Mammary epithelial cell (primary cell): ENCODE measurements at regions of chr1 and their contacts with region 1.

Region 1: DNA sequence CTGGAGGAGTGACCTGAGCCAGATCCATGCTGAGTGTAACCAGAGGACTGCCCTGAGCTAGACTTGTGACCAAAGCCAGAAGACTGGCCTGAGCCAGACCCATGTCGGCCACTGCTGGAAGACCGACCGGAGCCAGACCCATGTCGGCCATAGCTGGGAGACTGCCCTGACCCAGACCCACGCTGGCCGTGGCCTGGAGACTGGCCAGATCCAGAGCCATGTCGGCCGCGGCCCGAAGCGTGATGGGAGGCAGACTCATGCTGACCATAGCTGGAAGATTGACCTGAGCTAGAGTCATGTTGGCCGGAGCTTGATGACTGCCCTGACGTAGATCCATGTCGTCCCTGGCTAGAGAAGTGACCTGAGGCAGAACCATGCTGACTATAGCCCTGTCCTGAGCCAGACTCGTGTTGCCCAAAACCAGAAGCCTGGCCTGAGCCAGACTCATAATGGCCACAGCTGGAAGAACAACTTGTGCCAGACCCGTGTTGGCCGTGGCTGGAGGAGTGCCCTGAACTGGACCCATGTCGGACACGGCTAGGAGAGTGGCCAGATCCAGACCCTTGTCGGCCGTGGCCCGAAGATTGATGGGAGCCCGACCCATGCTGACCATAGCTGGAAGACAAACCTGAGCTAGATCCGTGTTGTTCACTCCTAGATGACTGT is 5.1 kb downstream of the HRNR start:
- DNase-seq: no peak
- H3K4me3 ChIP-seq: no peak overlapping the region
- H3K27ac ChIP-seq: no peak overlapping the region
- H3K4me1 ChIP-seq: no peaks in the 10 kb centered on the region
- H3K27me3 ChIP-seq: no peaks in the 10 kb centered on the region
- CTCF ChIP-seq: no peak

Region 2: DNA sequence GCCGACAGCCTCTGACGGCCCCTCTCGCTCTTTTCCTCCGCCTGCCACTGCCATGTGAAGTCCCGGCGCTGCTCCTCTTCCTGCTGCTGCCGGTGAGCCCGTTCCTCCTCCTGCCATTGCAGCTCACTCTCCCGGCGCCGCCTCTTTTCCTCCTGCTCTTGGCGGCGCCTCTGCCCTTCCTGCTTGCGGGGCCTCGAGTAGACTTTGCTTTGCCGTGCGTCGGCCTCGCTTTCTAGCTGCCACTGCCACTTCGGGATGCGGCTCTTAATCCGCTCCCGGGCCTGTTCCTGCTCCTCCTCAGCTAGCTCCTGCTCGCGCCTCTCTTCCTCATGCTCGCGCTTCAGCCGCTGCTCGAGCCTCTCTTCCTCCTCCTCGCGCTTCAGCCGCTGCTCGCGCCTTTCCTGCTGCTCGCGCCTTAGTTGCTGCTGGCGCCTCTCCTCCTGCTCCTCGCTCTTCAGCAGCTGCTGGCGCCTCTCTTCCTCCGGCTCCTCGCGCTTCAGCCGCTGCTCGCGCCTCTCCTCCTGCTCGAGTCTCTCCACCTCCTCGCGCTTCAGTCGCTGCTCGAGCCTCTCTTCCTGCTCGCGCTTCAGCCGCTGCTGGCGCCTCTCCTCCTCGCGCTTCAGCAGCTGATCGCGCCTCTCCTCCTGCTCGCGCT is 107.9 kb before region 1 on chr1:
- CTCF ChIA-PET with region 1: no interaction called
- dilution Hi-C with region 1: loop called (anchors 5 kb)
- in situ Hi-C with region 1: no loop called
- intact Hi-C with region 1: no loop called
- DNase-seq: peak; percentile 71
- H3K4me3 ChIP-seq: peak overlapping the region; percentile 54 to 65 (median 55)
- H3K27ac ChIP-seq: no peak overlapping the region
- H3K4me1 ChIP-seq: peaks cover 51% of the 10 kb centered on the region
- H3K27me3 ChIP-seq: peaks cover 29% of the 10 kb centered on the region
- CTCF ChIP-seq: no peak